Mammary epithelial cell (primary cell): ENCODE measurements at regions of chr13 and their contacts with region 1.

Region 1: DNA sequence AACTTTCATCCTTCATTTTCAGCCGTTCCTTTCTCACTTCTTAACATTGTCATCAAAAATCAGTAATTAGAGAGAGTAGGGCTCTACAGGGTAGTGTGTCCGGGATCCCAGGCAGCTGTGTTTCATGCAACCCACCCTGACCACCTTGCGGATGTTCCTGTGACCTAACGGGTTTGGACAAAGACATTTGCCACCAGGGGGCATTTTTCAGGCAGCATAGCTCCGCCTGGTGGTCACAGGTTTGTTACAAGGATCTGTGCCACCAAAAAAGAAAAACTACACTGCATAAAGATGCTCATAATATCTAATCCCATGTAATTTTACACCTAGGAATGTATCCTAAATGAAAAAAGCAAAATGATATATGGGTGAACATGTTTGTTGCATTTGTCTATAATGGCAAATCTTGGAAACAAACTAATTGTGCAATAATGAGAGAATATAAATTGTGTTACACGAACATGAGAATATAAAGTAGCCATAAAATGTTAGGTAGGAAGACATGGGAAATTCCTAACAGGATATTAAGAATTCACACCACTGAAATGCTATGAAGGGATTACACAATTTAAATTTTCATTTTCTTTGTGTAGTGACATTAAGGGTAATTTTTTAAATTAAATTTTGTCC is 123.0 kb downstream of the SLC7A1 start:
- DNase-seq: peak; percentile 29
- H3K4me3 ChIP-seq: no peak overlapping the region
- H3K27ac ChIP-seq: no peak overlapping the region
- H3K4me1 ChIP-seq: no peaks in the 10 kb centered on the region
- H3K27me3 ChIP-seq: no peaks in the 10 kb centered on the region
- CTCF ChIP-seq: peak; percentile 99 to 100

Region 2: DNA sequence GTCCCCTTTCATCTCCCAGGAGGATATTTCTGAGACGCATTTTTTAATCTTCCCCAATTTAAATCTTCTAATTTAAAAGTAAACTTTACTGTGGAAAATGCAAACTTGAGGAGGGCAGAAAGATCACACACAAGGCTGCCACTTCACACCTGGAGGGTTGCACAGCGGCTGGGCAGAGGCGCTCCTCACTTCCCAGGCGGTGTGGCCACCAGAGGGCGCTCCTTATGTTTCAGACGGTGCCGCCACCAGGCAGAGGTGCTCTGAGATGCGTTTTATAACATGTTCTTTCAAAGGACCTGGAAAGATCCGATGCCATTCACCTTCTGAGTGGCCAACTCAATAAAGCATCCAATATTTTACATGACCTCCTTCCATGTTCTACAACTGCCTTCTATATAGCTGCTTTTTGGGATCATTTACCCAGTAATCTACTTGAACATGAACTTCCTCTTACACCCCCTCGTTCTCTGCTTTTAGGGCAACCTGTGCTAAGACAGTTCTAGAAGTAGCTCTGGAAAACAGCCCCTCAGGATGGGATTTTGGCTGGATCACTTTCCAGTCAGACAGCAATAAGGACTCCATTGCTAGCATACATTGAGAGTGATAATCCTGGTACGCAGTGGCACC is 667.1 kb before region 1 on chr13:
- CTCF ChIA-PET with region 1: no interaction called
- dilution Hi-C with region 1: no loop called
- in situ Hi-C with region 1: no loop called
- intact Hi-C with region 1: loop called (anchors 5 kb)
- DNase-seq: no peak
- H3K4me3 ChIP-seq: no peak overlapping the region
- H3K27ac ChIP-seq: no peak overlapping the region
- H3K4me1 ChIP-seq: no peaks in the 10 kb centered on the region
- H3K27me3 ChIP-seq: no peaks in the 10 kb centered on the region
- CTCF ChIP-seq: peak; percentile 28 to 31

Region 3: DNA sequence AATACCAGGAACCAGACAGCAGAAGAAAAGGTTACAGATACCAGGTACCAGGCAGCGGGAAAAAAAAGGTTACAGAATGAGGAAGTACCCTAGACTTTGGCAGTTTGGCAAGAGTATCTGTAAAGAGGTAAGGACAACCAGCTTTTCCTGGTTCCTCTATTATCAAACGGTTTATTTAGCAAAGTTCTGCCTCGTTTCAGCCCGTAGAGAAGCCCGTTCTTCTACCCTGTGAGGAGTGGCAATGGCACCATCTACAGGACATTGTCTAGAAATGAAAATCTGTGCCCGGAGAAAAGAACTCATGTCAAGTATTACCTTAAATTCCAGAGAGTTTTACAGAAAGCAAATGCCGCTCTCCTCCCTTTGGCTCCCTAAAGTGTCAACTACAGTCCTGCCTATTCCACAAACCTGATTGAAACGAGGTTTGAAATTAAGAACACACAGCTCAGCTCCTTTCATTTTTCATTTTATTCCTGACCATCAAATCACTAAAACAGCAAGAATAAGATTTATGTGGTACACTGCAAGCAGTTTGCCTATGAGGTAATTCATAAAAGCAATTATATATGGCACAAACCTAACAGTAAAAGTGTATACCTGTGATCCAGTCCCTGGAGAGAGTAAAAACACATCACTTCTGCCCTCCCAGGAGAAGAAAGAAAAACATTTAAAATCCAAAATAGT is 103.2 kb before region 1 on chr13:
- CTCF ChIA-PET with region 1: no interaction called
- dilution Hi-C with region 1: no loop called
- in situ Hi-C with region 1: no loop called
- intact Hi-C with region 1: loop called (anchors 1 kb)
- DNase-seq: peak; percentile 25
- H3K4me3 ChIP-seq: no peak overlapping the region
- H3K27ac ChIP-seq: no peak overlapping the region
- H3K4me1 ChIP-seq: no peaks in the 10 kb centered on the region
- H3K27me3 ChIP-seq: no peaks in the 10 kb centered on the region
- CTCF ChIP-seq: peak; percentile 39 to 63

Region 4: DNA sequence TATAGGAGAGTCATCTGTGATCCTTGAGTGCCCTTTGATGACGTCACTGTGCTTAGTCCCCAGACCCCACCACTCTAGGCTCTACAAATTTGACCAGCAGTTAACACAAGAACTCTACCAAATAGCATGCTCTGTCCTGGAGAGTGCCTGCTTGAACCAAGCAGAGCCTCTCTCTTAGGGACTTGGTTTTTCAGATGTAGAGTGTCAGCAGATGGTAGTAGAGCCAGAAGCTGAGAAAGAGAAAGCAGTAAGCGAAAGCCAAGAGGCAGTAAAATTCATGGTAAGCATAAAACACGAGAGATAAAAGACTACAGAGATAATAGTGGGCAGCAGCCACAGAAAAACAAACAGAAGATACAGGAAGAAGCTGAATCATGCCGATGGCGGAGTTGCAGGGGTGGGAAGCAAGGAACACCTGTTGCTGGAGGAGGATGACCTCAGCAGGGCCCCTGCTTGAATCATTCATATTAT is 70.2 kb before region 1 on chr13:
- CTCF ChIA-PET with region 1: no interaction called
- dilution Hi-C with region 1: no loop called
- in situ Hi-C with region 1: no loop called
- intact Hi-C with region 1: no loop called
- DNase-seq: peak; percentile 17
- H3K4me3 ChIP-seq: no peak overlapping the region
- H3K27ac ChIP-seq: no peak overlapping the region
- H3K4me1 ChIP-seq: no peaks in the 10 kb centered on the region
- H3K27me3 ChIP-seq: no peaks in the 10 kb centered on the region
- CTCF ChIP-seq: no peak

Region 5: DNA sequence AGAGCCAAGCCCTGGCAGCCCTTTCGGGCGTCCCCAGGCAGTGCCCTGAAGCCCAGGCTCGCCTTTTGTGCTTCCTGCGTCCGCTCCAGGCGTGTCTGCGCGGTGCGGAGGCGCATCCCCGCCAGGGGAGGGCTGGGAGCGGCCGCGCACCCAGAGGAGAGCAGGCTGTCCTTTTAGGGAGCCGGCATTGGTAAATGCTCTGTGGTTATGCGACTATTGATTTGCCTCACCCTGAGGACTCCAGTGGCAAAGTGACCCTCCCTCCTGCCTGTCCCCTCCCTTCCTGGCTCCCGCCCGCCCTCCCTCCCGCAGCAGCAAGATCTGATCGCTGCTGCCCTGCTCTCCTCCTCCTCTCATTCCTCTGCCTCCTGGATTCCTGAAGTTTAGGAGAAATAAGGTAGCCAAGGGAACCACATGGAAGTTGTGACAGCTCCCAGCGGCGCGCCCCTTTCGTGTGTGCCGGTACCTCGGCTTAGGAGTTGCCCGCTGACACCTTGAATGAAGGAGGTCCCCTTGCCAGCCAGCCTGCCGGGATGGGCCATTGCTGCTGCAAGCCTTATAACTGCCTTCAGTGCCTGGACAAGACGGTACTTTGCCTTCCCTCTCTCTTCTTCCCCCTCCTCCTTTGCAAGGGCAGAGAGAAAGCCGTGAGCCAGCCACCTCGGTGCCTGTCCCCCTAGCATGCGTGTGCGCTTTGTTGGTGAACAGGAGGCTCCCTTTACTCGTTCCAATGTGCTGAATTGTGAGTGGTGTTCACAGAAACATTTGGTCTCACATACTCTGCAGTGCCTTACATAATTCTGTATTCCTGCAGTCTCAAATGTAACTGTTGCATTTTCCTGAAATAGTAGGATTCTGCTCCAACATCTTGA is 43.9 kb before region 1 on chr13:
- CTCF ChIA-PET with region 1: no interaction called
- dilution Hi-C with region 1: no loop called
- in situ Hi-C with region 1: no loop called
- intact Hi-C with region 1: loop called (anchors 1 kb)
- DNase-seq: peak; percentile 58
- H3K4me3 ChIP-seq: peak overlapping the region; percentile 32 to 40 (median 35)
- H3K27ac ChIP-seq: no peak overlapping the region
- H3K4me1 ChIP-seq: peaks cover 5% of the 10 kb centered on the region
- H3K27me3 ChIP-seq: peaks cover 2% of the 10 kb centered on the region
- CTCF ChIP-seq: peak in 1 of 2 donors; percentile 31

Region 6: GRCh38 chr13:29543230-29544215 is 71.1 kb after region 1 on chr13:
- CTCF ChIA-PET with region 1: no interaction called
- dilution Hi-C with region 1: no loop called
- in situ Hi-C with region 1: no loop called
- intact Hi-C with region 1: no loop called
- DNase-seq: peak; percentile 4
- H3K4me3 ChIP-seq: no peak overlapping the region
- H3K27ac ChIP-seq: no peak overlapping the region
- H3K4me1 ChIP-seq: no peaks in the 10 kb centered on the region
- H3K27me3 ChIP-seq: no peaks in the 10 kb centered on the region
- CTCF ChIP-seq: no peak

Region 7: DNA sequence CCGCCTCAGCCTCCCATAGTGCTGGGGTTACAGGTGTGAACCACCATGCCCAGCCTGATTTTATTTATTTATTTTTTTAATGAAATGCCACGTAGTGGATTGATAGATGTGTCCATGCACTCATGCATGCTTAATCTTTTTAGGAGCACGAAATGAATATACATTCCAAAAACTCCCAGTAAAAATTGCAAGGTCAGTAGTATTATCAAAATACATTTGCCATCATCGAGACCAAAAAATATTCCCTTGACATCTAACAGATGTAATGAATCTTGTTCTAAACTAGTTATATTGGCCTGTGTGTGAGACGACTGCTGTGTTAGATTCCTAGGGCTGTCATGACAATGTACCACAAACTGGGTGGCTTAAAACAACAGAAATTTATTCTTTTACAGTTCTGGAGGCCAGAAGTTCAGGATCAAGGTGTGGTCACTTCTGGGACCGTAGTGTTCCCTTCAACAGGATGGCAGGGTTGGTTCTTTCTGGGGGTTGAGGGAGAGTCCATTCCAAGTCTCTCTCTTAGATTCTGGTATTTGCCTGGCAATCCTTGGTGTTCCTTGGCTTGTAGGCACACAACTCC is 434.1 kb after region 1 on chr13:
- CTCF ChIA-PET with region 1: no interaction called
- dilution Hi-C with region 1: no loop called
- in situ Hi-C with region 1: no loop called
- intact Hi-C with region 1: no loop called
- DNase-seq: no peak
- H3K4me3 ChIP-seq: no peak overlapping the region
- H3K27ac ChIP-seq: no peak overlapping the region
- H3K4me1 ChIP-seq: peaks cover 40% of the 10 kb centered on the region
- H3K27me3 ChIP-seq: no peaks in the 10 kb centered on the region
- CTCF ChIP-seq: no peak